GM23248 (cell line): ENCODE measurements at regions of chr7 and their contacts with region 1.

Region 1: GRCh38 chr7:56063882-56064625 is at the start of gene SUMF2:
- DNase-seq: peak; percentile 96
- H3K4me3 ChIP-seq: peak within 1 kb of the TSS; percentile 89
- H3K27ac ChIP-seq: peak within 1 kb of the TSS; percentile 86
- H3K4me1 ChIP-seq: peaks cover 31% of the 10 kb centered on the region
- H3K27me3 ChIP-seq: no peaks in the 10 kb centered on the region
- total RNA-seq, gene SUMF2: 186 and 206 TPM in 2 replicates

Region 2: GRCh38 chr7:54758702-54759592 is 1305.1 kb before region 1 on chr7 and contains the start of gene SEC61G:
- in situ Hi-C with region 1: loop called (anchors 25 kb)
- DNase-seq: peak; percentile 99
- H3K4me3 ChIP-seq: peak within 1 kb of the TSS; percentile 95
- H3K27ac ChIP-seq: peak within 1 kb of the TSS; percentile 95
- H3K4me1 ChIP-seq: peaks cover 31% of the 10 kb centered on the region
- H3K27me3 ChIP-seq: no peaks in the 10 kb centered on the region
- total RNA-seq, gene SEC61G: 551 and 1,194 TPM in 2 replicates

Region 3: GRCh38 chr7:55018361-55019190 is 1045.5 kb before region 1 on chr7 and contains the start of gene EGFR:
- in situ Hi-C with region 1: no loop called
- DNase-seq: peak; percentile 89
- H3K4me3 ChIP-seq: peak within 1 kb of the TSS; percentile 85
- H3K27ac ChIP-seq: peak within 1 kb of the TSS; percentile 79
- H3K4me1 ChIP-seq: peaks cover 31% of the 10 kb centered on the region
- H3K27me3 ChIP-seq: no peaks in the 10 kb centered on the region
- total RNA-seq, gene EGFR: 53.5 and 55.0 TPM in 2 replicates

Region 4: GRCh38 chr7:56188823-56189346 is 124.8 kb after region 1 on chr7:
- in situ Hi-C with region 1: no loop called
- DNase-seq: no peak
- H3K4me3 ChIP-seq: no peak overlapping the region
- H3K27ac ChIP-seq: no peak overlapping the region
- H3K4me1 ChIP-seq: no peaks in the 10 kb centered on the region
- H3K27me3 ChIP-seq: no peaks in the 10 kb centered on the region